Naive thymus-derived CD4-positive, alpha-beta T cell (primary cell): ENCODE measurements at regions of chr4 and their contacts with region 1.

Region 1: GRCh38 chr4:142155347-142155746 is 519.0 kb downstream of the IL15 start:
- DNase-seq: no peak
- ATAC-seq: no peak
- H3K4me3 ChIP-seq: no peak overlapping the region
- H3K4me3 Mint-ChIP-seq: no peak overlapping the region
- H3K27ac ChIP-seq: no peak overlapping the region
- H3K27ac Mint-ChIP-seq: peak overlapping the region in 3 of 9 donors; percentile 11 to 48 (median 15)
- H3K4me1 ChIP-seq: no peaks in the 10 kb centered on the region
- H3K4me1 Mint-ChIP-seq: peaks cover 0 to 35% (median 25%) of the 10 kb centered on the region in 7 donors
- H3K27me3 ChIP-seq: no peaks in the 10 kb centered on the region
- H3K27me3 Mint-ChIP-seq: no peaks in the 10 kb centered on the region

Region 2: DNA sequence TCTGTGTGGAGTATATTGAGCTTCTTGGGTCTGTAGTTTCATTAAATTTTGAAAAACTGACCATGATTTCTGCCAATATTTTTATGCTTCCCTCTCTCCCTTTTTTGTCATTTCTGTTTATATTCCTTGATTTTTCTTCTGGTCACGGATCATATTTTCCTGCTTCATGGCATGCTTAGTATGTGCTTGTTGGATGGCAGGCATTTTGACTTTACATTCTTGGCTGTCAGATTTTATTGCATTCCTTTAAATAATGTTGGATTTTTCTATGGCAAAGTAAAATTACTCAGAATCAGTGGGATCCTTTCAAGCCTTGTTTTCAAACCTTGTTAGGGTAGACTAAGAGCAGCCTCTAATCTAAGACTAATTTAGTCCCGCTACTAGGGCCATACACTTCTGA is 12.8 kb after region 1 on chr4:
- CTCF ChIA-PET with region 1: no interaction called
- POLR2A ChIA-PET with region 1: interaction called, 3 read pairs
- intact Hi-C with region 1: loop called in 1 of 2 experiments (anchors 2 kb)
- DNase-seq: no peak
- ATAC-seq: no peak
- H3K4me3 ChIP-seq: no peak overlapping the region
- H3K4me3 Mint-ChIP-seq: no peak overlapping the region
- H3K27ac ChIP-seq: no peak overlapping the region
- H3K27ac Mint-ChIP-seq: peak overlapping the region in 5 of 9 donors; percentile 23 to 71 (median 49)
- H3K4me1 ChIP-seq: no peaks in the 10 kb centered on the region
- H3K4me1 Mint-ChIP-seq: peaks cover 2 to 51% (median 28%) of the 10 kb centered on the region in 7 donors
- H3K27me3 ChIP-seq: no peaks in the 10 kb centered on the region
- H3K27me3 Mint-ChIP-seq: no peaks in the 10 kb centered on the region